ENCODE measurements at regions of chr3 and their contacts with region 1.

Region 1: DNA sequence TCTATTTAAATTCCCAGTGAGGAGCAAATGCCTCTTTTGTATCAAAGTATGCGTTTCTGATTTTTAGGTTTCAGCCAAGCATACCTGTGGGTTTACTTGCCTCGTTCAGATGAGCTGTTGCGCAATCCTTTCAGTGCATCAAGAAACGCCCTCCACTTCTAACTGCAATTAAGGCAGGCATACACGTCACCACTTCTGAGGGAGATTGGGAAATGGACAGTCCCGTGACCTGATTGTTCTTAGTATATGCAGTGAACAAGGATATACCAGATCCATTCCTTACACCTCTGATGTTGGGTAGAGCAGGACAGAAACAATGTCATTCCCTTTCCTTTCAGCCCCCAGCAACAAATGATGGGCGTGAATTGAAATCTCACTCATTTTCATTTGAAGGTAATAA is 219.0 kb downstream of the ITPR1 start:
- DNase-seq: no peak
- ATAC-seq: no peak
- H3K4me3 Mint-ChIP-seq: no peak overlapping the region
- H3K27ac Mint-ChIP-seq: no peak overlapping the region
- H3K4me1 Mint-ChIP-seq: no peaks in the 10 kb centered on the region
- H3K27me3 Mint-ChIP-seq: no peaks in the 10 kb centered on the region

Region 2: GRCh38 chr3:4736284-4736861 is 24.2 kb after region 1 on chr3:
- CTCF ChIA-PET with region 1: interaction called, 18 read pairs
- POLR2A ChIA-PET with region 1: no interaction called
- intact Hi-C with region 1: no loop called
- DNase-seq: no peak
- ATAC-seq: no peak
- H3K4me3 Mint-ChIP-seq: no peak overlapping the region
- H3K27ac Mint-ChIP-seq: peak overlapping the region; percentile 63
- H3K4me1 Mint-ChIP-seq: peaks cover 55% of the 10 kb centered on the region
- H3K27me3 Mint-ChIP-seq: no peaks in the 10 kb centered on the region

Region 3: GRCh38 chr3:4797201-4797705 is 85.1 kb after region 1 on chr3:
- CTCF ChIA-PET with region 1: interaction called, 13 read pairs
- POLR2A ChIA-PET with region 1: no interaction called
- intact Hi-C with region 1: no loop called
- DNase-seq: no peak
- ATAC-seq: no peak
- H3K4me3 Mint-ChIP-seq: no peak overlapping the region
- H3K27ac Mint-ChIP-seq: no peak overlapping the region
- H3K4me1 Mint-ChIP-seq: no peaks in the 10 kb centered on the region
- H3K27me3 Mint-ChIP-seq: no peaks in the 10 kb centered on the region

Region 4: GRCh38 chr3:4963669-4964589 is 251.8 kb after region 1 on chr3:
- CTCF ChIA-PET with region 1: interaction called, 10 read pairs
- POLR2A ChIA-PET with region 1: no interaction called
- intact Hi-C with region 1: no loop called
- DNase-seq: no peak
- ATAC-seq: no peak
- H3K4me3 Mint-ChIP-seq: no peak overlapping the region
- H3K27ac Mint-ChIP-seq: no peak overlapping the region
- H3K4me1 Mint-ChIP-seq: peaks cover 16% of the 10 kb centered on the region
- H3K27me3 Mint-ChIP-seq: no peaks in the 10 kb centered on the region

Region 5: GRCh38 chr3:4986782-4987537 is 274.8 kb after region 1 on chr3:
- CTCF ChIA-PET with region 1: interaction called, 20 read pairs
- POLR2A ChIA-PET with region 1: no interaction called
- intact Hi-C with region 1: no loop called
- DNase-seq: peak; percentile 87
- ATAC-seq: peak; percentile 55
- H3K4me3 Mint-ChIP-seq: peak overlapping the region; percentile 72
- H3K27ac Mint-ChIP-seq: peak overlapping the region; percentile 76
- H3K4me1 Mint-ChIP-seq: peaks cover 56% of the 10 kb centered on the region
- H3K27me3 Mint-ChIP-seq: no peaks in the 10 kb centered on the region

Region 6: DNA sequence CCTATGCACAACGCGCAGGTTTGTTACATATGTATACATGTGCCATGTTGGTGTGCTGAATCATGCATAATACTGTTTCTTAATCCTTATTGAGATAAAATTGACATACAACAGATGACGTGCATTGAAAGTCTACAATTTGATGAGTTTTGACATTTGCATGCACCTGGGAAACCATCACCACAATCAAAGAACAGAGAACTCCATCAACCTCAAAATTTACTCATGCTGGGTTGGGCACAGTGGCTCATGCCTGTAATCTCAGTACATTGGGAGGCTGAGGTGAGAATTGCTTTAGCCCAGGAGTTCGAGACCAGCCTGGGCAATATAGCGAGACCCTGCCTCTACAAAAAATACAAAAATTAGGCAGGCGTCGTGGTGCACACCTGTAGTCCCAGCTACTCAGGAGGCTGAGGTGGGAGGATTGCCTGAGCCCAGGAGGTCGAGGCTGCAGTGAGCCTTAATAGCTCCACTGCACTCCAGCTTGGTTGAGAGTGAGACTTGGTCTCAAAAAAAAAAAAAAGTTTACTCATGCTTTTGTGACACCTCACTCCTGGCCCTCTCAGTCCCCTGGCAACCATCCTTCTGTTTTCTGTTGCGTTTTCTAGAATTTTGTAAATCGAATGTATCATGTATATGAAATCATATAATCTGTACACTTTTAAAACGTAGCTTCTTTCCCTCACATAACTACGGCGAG is 323.7 kb after region 1 on chr3:
- CTCF ChIA-PET with region 1: interaction called, 13 read pairs
- POLR2A ChIA-PET with region 1: no interaction called
- intact Hi-C with region 1: no loop called
- DNase-seq: no peak
- ATAC-seq: peak; percentile 7
- H3K4me3 Mint-ChIP-seq: no peak overlapping the region
- H3K27ac Mint-ChIP-seq: no peak overlapping the region
- H3K4me1 Mint-ChIP-seq: peaks cover 16% of the 10 kb centered on the region
- H3K27me3 Mint-ChIP-seq: peaks cover 2% of the 10 kb centered on the region

Region 7: DNA sequence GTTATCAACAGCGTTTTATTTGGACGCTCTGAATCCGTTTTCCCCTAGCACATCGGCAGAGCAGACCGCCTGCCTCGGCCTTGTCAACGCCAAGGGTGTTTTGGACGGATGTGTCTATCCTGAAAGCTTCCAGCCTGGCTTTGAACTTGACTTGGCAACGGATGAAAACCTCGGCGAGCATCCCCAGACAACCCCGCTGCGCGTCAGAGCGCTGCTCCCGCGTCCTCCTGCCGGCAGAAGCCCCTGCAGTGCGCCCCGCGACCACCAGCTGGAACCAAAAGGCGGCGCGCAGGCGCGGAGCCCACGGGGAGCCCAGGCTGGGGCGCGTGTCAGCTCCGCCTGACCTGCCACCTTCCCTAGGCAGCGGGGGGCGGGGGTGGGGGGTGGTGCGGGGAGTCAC is 383.7 kb after region 1 on chr3:
- CTCF ChIA-PET with region 1: interaction called, 11 read pairs
- POLR2A ChIA-PET with region 1: no interaction called
- intact Hi-C with region 1: no loop called
- DNase-seq: peak; percentile 31
- ATAC-seq: no peak
- H3K4me3 Mint-ChIP-seq: no peak overlapping the region
- H3K27ac Mint-ChIP-seq: no peak overlapping the region
- H3K4me1 Mint-ChIP-seq: peaks cover 4% of the 10 kb centered on the region
- H3K27me3 Mint-ChIP-seq: peaks cover 32% of the 10 kb centered on the region

Region 8: GRCh38 chr3:5205165-5205941 is 493.2 kb after region 1 on chr3:
- CTCF ChIA-PET with region 1: no interaction called
- POLR2A ChIA-PET with region 1: no interaction called
- intact Hi-C with region 1: no loop called
- DNase-seq: peak; percentile 72
- ATAC-seq: peak; percentile 90
- H3K4me3 Mint-ChIP-seq: no peak overlapping the region
- H3K27ac Mint-ChIP-seq: peak overlapping the region; percentile 87
- H3K4me1 Mint-ChIP-seq: peaks cover 41% of the 10 kb centered on the region
- H3K27me3 Mint-ChIP-seq: no peaks in the 10 kb centered on the region

Measured in activated CD4-positive, alpha-beta T cell treated with anti-CD3 and anti-CD28 coated beads for 36 hours (primary cell).